Transverse colon (tissue), 4 donors: ENCODE measurements at regions of chr9 and their contacts with region 1.

Region 1: DNA sequence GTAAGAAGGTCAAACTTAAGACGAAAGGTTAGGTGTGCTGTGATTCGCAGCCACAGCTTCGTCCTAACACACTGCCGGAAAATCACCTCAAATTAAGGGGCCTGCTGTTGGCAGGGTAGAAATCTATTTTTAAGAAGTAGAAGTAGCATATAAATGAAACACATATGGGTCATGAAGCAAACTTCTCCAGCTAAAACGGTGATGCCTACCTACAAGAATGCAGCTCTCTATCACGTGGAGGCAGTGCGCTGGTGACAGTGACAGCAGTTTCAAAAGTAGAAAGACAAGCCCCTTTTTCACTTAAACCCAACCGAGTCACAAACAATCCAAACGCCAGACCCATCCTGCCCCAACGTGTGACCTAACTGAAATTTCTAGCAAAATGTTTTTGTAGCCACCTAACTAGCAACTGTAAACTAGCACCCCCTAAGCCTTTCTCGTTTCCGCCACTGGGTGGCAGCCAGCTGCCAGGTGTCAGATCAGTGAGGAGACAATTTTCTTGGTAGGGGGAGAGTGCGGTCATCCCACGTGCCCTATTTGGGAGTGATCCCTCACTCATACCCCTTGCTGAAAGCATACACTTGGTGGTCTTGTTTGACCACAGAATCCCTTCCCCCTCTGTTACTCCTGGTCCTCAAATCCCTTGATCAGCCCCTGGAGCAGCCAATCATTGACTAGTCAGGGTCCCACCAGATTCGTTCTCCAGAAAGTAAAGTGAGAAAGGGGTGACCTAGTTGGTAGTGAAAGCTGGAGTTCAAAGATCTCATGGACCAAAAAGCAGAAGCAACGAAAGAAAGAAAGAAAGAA is 71.8 kb upstream of the MAMDC2 start:
- DNase-seq: peak; percentile 67
- H3K4me3 ChIP-seq: no peak overlapping the region
- H3K27ac ChIP-seq: no peak overlapping the region
- H3K4me1 ChIP-seq: no peaks in the 10 kb centered on the region
- H3K27me3 ChIP-seq: no peaks in the 10 kb centered on the region
- CTCF ChIP-seq: peak; percentile 73 to 90 (median 82)
- EP300 ChIP-seq: no peak
- POLR2A ChIP-seq: no peak

Region 2: GRCh38 chr9:69949396-69949795 is 22.4 kb before region 1 on chr9:
- in situ Hi-C with region 1: no loop called
- intact Hi-C with region 1: no loop called
- DNase-seq: no peak
- H3K4me3 ChIP-seq: no peak overlapping the region
- H3K27ac ChIP-seq: no peak overlapping the region
- H3K4me1 ChIP-seq: no peaks in the 10 kb centered on the region
- H3K27me3 ChIP-seq: no peaks in the 10 kb centered on the region
- CTCF ChIP-seq: no peak
- EP300 ChIP-seq: no peak
- POLR2A ChIP-seq: no peak

Region 3: DNA sequence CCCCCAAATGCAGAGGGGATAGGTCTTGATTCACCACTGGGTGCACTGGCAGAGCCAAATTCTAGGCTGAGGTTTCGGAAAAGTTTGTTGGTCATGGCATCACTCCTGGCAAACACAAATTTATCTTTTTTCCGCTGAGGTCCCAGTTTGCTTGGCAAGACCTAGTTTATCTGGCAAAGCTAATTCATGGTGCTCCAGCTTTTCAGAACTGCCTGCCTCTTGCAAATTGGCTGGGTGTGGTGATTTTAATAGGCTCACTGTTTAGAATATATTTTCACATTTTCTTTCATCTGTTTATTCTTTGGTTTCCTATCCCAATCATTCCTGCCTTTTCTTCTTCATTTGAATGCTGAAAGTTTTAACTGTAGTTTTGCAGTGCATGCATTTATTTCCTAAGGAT is 21.3 kb after region 1 on chr9:
- in situ Hi-C with region 1: no loop called
- intact Hi-C with region 1: no loop called
- DNase-seq: no peak
- H3K4me3 ChIP-seq: no peak overlapping the region
- H3K27ac ChIP-seq: no peak overlapping the region
- H3K4me1 ChIP-seq: peaks cover 0 to 8% (median 0%) of the 10 kb centered on the region in 4 donors
- H3K27me3 ChIP-seq: no peaks in the 10 kb centered on the region
- CTCF ChIP-seq: no peak
- EP300 ChIP-seq: no peak
- POLR2A ChIP-seq: no peak

Region 4: DNA sequence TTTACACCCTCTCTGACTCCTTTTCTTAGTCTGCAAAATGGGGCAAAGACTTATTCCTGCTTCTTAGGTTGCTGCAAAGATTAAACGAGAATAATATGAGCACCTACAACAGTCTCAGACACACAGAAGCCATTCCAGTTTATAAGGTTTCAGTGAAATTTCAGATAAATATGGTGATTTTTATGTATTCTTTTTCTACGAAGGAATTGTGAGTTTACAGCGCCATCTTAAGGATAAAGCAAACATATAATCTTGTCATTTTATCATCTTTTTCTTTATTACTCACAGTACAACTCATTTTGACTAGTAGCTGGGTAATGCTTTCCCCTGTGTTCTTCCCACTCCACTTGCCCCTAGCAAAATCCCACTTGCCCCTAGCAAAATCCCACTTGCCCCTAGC is 257.7 kb after region 1 on chr9:
- in situ Hi-C with region 1: loop called in 1 of 4 experiments (anchors 25 kb)
- intact Hi-C with region 1: no loop called
- DNase-seq: no peak
- H3K4me3 ChIP-seq: no peak overlapping the region
- H3K27ac ChIP-seq: no peak overlapping the region
- H3K4me1 ChIP-seq: peaks cover 0 to 7% (median 0%) of the 10 kb centered on the region in 4 donors
- H3K27me3 ChIP-seq: no peaks in the 10 kb centered on the region
- CTCF ChIP-seq: peak in 3 of 5 experiments; percentile 9 to 16 (median 10)
- EP300 ChIP-seq: no peak
- POLR2A ChIP-seq: no peak

Region 5: DNA sequence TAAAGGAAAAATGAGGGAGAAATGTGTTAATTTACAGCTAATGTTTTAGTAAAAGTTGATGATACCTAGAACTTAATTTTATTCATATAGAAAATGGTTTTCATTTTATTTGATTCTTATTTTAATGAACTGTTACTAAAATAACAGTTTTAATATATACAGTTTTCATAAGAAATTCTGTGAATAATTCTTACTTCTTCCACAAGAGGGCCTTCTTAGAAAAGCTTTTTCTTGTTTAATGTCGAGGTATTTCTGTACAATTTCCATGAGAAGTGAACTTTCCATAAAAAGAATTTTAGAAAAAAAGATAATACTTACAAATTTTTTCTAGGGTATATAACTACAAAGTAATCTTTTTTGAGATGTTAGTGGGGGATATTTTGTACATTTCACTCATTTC is 368.7 kb after region 1 on chr9:
- in situ Hi-C with region 1: no loop called
- intact Hi-C with region 1: no loop called
- DNase-seq: no peak
- H3K4me3 ChIP-seq: no peak overlapping the region
- H3K27ac ChIP-seq: no peak overlapping the region
- H3K4me1 ChIP-seq: peaks cover 0 to 3% (median 0%) of the 10 kb centered on the region in 4 donors
- H3K27me3 ChIP-seq: no peaks in the 10 kb centered on the region
- CTCF ChIP-seq: peak; percentile 53 to 77 (median 60)
- EP300 ChIP-seq: no peak
- POLR2A ChIP-seq: no peak